ENCODE measurements at regions of chr11 and their contacts with region 1.

Region 1: DNA sequence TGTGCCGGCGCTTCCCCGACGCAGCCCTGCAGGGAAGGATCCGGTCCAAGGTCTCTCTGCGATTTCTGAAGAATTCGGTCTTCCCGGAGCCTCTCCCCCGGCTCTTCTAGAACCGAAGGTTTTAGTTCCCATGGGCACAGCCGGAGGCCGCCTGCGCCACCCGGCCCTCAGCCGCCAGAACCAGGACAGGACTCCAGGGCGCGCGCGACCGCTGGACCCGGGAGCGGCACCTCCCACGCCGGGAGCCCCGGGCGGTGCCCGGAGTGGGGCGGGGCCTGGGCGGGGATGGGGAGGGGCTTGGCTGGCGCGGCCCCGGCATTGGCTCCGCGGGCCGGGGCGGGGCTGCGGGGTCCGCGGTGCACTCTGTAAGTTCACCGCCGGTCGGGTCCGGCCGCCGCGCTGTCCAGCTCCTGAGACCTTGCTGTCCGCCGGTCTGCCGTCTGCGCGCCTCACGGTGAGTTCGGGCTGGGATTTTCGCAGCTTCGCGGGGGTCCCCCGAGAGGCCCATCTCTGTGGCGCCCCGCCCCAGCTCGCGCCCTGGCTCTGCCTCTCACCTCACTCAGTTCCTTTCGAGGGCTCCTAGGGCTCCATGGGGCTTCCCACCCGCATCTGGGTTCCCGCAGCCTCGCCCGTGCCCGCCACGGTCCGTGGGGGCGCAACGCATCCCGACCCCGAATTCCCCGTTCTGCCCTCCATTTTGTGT is at the start of gene CDC42EP2:
- DNase-seq: peak; percentile 88
- H3K4me3 ChIP-seq: peak within 1 kb of the TSS; percentile 87 to 97 (median 90)
- H3K27ac ChIP-seq: peak within 1 kb of the TSS; percentile 84
- H3K4me1 ChIP-seq: peaks cover 31% of the 10 kb centered on the region
- H3K27me3 ChIP-seq: no peaks in the 10 kb centered on the region
- CTCF ChIP-seq: no peak
- POLR2A ChIP-seq: peak; percentile 98
- total RNA-seq, gene CDC42EP2: 23.4 and 23.9 TPM in 2 replicates

Region 2: DNA sequence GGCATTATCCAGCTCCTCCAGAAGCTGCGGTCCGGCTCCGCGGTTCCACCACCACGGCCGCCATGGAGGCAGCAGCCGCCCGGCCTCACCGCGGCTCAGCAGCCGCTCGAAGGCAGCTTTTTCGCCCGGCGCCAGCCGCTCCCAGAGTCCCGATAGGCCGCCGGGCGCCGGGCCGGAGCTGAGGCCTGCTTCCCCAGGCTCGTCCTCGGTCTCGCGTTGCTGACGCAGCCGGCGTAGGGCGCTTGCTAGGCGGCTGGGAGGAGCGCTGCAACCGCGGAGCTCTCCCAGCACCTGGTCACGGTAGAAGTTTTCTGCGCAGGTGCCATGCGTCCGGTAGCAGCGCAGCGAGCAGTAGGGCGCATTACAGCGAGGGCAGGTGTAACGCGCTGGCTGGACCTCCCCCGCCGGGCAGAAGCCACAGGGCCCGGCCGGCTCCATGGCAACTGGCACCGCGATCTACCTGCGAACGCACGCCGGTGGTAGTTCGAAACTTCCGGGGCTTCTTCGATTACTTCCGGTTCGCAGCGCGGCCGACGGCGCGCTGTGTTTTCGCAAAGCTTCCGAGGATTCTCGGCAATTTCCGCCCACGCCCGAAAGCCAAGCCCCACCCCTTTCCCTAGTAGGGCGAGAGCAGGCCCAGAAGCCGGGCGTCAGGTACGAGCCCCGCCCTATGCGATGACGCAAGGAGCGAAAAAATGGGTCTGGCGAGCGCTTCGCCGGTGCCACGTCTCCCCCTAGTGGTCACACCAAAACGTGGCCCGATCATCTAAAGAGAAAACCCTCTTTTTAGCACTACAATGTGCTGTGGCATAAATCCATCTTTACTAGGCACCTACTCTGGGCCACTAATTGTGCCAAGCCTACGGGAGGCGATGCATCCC is 197.2 kb before region 1 on chr11 and contains the start of gene ZNHIT2:
- CTCF ChIA-PET with region 1: interaction called, 3 read pairs
- POLR2A ChIA-PET with region 1: no interaction called
- dilution Hi-C with region 1: no loop called
- intact Hi-C with region 1: loop called (anchors 2 kb)
- DNase-seq: peak; percentile 99
- H3K4me3 ChIP-seq: peak within 1 kb of the TSS; percentile 24 to 75 (median 46)
- H3K27ac ChIP-seq: peak within 1 kb of the TSS; percentile 9
- H3K4me1 ChIP-seq: peaks cover 21% of the 10 kb centered on the region
- H3K27me3 ChIP-seq: no peaks in the 10 kb centered on the region
- CTCF ChIP-seq: peak; percentile 89 to 91
- POLR2A ChIP-seq: peak; percentile 85
- total RNA-seq, gene ZNHIT2: 9.0 and 9.2 TPM in 2 replicates

Region 3: DNA sequence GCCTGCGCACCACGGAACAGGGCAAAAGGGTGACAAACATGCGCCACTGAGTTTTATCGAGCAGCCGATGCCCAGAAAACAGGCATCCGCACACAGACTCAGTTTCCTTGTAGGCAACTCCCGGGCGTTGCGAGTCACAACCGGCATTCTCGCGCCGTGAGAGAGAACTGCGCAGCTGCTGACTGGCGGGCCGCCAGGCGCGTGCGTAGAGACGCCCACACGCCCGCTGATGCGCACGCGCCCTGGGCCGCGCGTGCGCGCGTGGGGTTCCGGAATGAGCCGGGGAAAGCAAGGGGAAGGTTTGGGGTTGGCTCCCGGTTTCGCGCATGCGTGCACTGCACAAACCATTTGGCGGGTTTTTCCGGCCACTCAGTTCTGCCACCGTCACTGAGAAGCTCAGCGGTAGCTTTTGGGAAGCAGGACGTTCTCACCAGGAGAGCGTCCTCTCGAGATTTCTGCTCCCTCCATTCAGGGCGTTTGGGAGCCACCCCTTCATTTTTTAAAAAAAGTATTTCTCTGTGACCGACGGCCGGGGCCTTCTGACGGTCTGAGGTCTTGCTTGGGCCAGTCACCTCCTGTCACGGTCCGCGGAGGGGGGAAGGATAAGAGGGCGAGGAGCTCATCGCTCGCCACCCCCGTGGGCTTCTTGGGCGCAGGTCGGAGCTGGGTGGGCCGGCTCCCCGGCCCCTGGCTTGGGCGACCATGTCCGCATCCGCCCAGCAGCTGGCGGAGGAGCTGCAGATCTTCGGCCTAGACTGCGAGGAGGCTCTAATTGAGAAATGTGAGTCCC is 52.9 kb before region 1 on chr11 and contains the start of gene POLA2:
- CTCF ChIA-PET with region 1: interaction called, 27 read pairs
- POLR2A ChIA-PET with region 1: interaction called, 3 read pairs
- dilution Hi-C with region 1: no loop called
- intact Hi-C with region 1: no loop called
- DNase-seq: peak; percentile 97
- H3K4me3 ChIP-seq: peak within 1 kb of the TSS; percentile 65 to 83 (median 82)
- H3K27ac ChIP-seq: peak within 1 kb of the TSS; percentile 79
- H3K4me1 ChIP-seq: peaks cover 11% of the 10 kb centered on the region
- H3K27me3 ChIP-seq: no peaks in the 10 kb centered on the region
- CTCF ChIP-seq: no peak
- POLR2A ChIP-seq: peak; percentile 98
- total RNA-seq, gene POLA2: 24.0 and 25.4 TPM in 2 replicates

Region 4: DNA sequence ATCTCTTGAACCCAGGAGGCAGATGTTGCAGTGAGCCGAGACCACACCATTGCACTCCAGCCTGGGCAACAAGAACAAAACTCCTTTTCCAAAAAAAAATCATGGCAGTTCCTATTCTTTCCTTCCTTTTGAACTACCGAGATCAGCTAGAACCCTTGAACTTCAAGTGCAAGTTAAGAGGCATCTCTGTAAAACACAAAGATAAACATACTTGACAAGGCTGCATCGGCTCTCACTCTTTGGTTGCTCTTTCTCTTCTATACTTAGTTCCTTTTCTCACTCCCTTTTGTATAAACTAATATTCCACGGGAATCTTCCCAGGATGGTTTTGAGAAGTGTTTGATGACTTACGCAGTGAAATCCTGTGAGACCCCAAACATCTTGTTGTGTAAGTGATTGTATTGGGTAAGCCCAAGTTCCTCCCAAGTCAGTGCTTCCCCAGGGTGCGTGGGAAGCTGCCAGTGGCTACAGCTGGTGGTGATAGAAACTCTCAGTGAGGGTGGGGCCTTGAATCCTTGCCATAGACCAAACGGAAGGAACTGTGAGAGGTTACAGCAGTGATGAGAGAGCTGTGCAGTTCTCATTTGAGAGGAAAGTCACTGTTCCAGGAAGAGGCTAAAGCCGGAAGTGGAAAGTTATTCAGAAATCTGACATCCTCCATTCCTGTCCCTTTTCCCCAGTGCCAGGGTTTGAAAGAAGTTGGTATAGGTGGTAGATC is 24.0 kb before region 1 on chr11:
- CTCF ChIA-PET with region 1: interaction called, 103 read pairs
- POLR2A ChIA-PET with region 1: no interaction called
- dilution Hi-C with region 1: no loop called
- intact Hi-C with region 1: loop called (anchors 1 kb)
- DNase-seq: peak; percentile 87
- H3K4me3 ChIP-seq: no peak overlapping the region
- H3K27ac ChIP-seq: peak overlapping the region; percentile 35
- H3K4me1 ChIP-seq: peaks cover 29% of the 10 kb centered on the region
- H3K27me3 ChIP-seq: no peaks in the 10 kb centered on the region
- CTCF ChIP-seq: no peak
- POLR2A ChIP-seq: peak; percentile 57

Region 5: DNA sequence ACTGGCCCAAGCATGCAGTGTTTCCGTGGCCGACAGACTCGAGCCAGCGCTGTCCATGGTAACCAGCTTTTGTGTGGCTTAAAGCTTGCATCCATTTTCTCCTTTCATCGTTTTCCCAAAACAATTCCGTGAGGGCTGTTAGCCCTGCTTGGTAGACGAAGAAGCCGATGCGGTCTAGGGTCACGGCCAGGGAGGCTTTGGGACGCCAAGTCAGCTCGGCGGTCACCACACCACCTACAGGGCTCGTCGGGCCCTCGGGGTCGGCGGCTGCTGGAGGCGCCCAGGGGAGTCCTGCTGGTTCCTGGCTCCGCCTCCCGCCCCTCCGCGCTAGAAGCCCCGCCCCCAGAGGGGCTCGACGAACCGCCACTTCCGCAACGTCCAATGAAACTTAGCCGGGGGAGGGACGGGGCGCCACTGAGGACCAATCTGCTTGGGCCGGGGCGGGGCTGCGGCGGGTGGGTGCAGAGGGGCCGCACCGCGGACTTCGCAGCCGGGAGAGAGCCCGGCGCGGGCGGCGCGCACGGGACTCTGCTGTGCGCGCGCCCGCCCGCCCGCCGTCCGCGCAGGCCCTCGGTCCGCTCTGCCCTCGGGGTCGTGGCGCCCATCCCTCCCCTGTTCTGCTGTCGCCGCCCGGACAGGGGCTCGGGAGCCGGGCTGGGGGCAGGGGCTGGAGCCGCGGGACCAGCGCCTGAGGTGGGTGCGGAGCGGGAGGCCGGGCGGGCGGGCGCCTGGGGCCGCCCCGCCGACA is 39.8 kb after region 1 on chr11 and contains the start of gene TIGD3:
- CTCF ChIA-PET with region 1: interaction called, 31 read pairs
- POLR2A ChIA-PET with region 1: no interaction called
- dilution Hi-C with region 1: no loop called
- intact Hi-C with region 1: no loop called
- DNase-seq: peak; percentile 98
- H3K4me3 ChIP-seq: peak within 1 kb of the TSS; percentile 29 to 51 (median 47)
- H3K27ac ChIP-seq: no peak within 1 kb of the TSS
- H3K4me1 ChIP-seq: peaks cover 14% of the 10 kb centered on the region
- H3K27me3 ChIP-seq: peaks cover 5 to 6% of the 10 kb centered on the region in 2 experiments
- CTCF ChIP-seq: no peak
- POLR2A ChIP-seq: peak; percentile 79
- total RNA-seq, gene TIGD3: 0.27 TPM in 1 of 2 replicates, not detected in the other